PC-9 (cell line): ENCODE measurements at regions of chr7 and their contacts with region 1.

Region 1: GRCh38 chr7:12647364-12648219 is 39.8 kb upstream of the ARL4A start:
- DNase-seq: peak; percentile 80 to 92
- H3K4me3 ChIP-seq: no peak overlapping the region
- H3K27ac ChIP-seq: peak overlapping the region; percentile 51
- H3K4me1 ChIP-seq: peaks cover 34% of the 10 kb centered on the region
- H3K27me3 ChIP-seq: no peaks in the 10 kb centered on the region
- CTCF ChIP-seq: no peak

Region 2: DNA sequence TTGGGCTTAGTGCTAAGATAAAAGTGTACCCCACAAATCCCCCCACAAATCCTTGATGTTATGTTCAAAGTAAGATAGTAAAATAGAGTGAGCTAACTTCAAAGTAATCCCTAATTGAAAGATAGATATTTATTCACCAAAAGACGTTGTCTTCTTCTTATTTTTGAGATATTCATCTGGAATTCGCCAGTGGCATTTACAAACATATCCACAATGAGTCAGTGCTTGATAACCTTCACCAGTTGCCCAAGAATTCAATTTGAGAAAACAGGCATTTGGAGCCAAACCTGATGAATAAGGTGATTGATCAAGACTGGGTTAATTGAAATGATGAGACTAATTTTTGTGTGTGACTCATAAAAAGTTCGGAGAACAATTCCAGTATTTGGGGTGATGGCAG is 383.8 kb after region 1 on chr7:
- CTCF ChIA-PET with region 1: no interaction called
- POLR2A ChIA-PET with region 1: interaction called, 18 read pairs
- intact Hi-C with region 1: no loop called
- DNase-seq: peak in 1 of 2 experiments; percentile 58
- H3K4me3 ChIP-seq: no peak overlapping the region
- H3K27ac ChIP-seq: no peak overlapping the region
- H3K4me1 ChIP-seq: no peaks in the 10 kb centered on the region; the same call in 1 of the 2 replicates
- H3K27me3 ChIP-seq: no peaks in the 10 kb centered on the region
- CTCF ChIP-seq: no peak